PC-9 (cell line): ENCODE measurements at regions of chr10 and their contacts with region 1.

Region 1: GRCh38 chr10:50579491-50580472 is 44.0 kb downstream of the SGMS1 start:
- DNase-seq: peak in 1 of 2 experiments; percentile 96
- H3K4me3 ChIP-seq: peak overlapping the region; percentile 42
- H3K27ac ChIP-seq: peak overlapping the region; percentile 84
- H3K4me1 ChIP-seq: peaks cover 81% of the 10 kb centered on the region
- H3K27me3 ChIP-seq: no peaks in the 10 kb centered on the region
- CTCF ChIP-seq: no peak

Region 2: GRCh38 chr10:50497757-50498156 is 82.0 kb before region 1 on chr10:
- CTCF ChIA-PET with region 1: no interaction called
- POLR2A ChIA-PET with region 1: no interaction called
- intact Hi-C with region 1: no loop called
- DNase-seq: peak in 1 of 2 experiments; percentile 75
- H3K4me3 ChIP-seq: no peak overlapping the region
- H3K27ac ChIP-seq: peak overlapping the region; percentile 75
- H3K4me1 ChIP-seq: peaks cover 32% of the 10 kb centered on the region
- H3K27me3 ChIP-seq: no peaks in the 10 kb centered on the region
- CTCF ChIP-seq: no peak

Region 3: DNA sequence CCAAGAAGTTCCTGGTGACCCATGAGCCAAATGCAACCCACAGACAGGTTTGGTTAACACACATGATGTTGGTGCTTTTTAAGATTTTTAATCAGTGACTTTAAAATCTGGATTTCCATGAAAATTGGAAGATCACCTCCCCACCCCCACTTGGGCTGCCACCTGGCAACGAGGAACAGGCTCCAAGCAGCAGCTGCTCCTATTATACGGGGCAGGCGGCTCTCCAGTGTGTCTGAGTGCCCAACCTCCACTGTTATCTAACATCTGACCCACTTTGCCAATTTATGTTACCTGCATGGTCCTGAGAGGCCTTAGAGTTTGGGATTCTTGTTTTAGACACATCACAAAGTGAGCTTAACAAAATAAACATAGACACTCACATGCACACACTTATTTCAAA is 12.4 kb before region 1 on chr10:
- CTCF ChIA-PET with region 1: no interaction called
- POLR2A ChIA-PET with region 1: no interaction called
- intact Hi-C with region 1: no loop called
- DNase-seq: no peak
- H3K4me3 ChIP-seq: no peak overlapping the region
- H3K27ac ChIP-seq: no peak overlapping the region
- H3K4me1 ChIP-seq: peaks cover 24% of the 10 kb centered on the region
- H3K27me3 ChIP-seq: no peaks in the 10 kb centered on the region
- CTCF ChIP-seq: no peak

Region 4: GRCh38 chr10:50605269-50606263 is 25.8 kb after region 1 on chr10:
- CTCF ChIA-PET with region 1: no interaction called
- POLR2A ChIA-PET with region 1: no interaction called
- intact Hi-C with region 1: loop called (anchors 2 kb)
- DNase-seq: peak; percentile 60 to 92
- H3K4me3 ChIP-seq: no peak overlapping the region; the same call in 1 of the 2 replicates
- H3K27ac ChIP-seq: peak overlapping the region; percentile 53
- H3K4me1 ChIP-seq: peaks cover 45% of the 10 kb centered on the region
- H3K27me3 ChIP-seq: no peaks in the 10 kb centered on the region
- CTCF ChIP-seq: no peak